ENCODE measurements at regions of chr20 and their contacts with region 1.

Region 1: GRCh38 chr20:49384437-49385088 is 97.9 kb downstream of the KCNB1 start:
- DNase-seq: peak; percentile 83
- H3K4me3 ChIP-seq: no peak overlapping the region
- H3K27ac ChIP-seq: peak overlapping the region; percentile 66 to 91 (median 82)
- H3K4me1 ChIP-seq: peaks cover 0 to 81% (median 63%) of the 10 kb centered on the region in 4 donors
- H3K27me3 ChIP-seq: no peaks in the 10 kb centered on the region
- CTCF ChIP-seq: peak in 3 of 4 experiments; percentile 49 to 68 (median 58)
- EP300 ChIP-seq: no peak
- POLR2A ChIP-seq: no peak

Region 2: DNA sequence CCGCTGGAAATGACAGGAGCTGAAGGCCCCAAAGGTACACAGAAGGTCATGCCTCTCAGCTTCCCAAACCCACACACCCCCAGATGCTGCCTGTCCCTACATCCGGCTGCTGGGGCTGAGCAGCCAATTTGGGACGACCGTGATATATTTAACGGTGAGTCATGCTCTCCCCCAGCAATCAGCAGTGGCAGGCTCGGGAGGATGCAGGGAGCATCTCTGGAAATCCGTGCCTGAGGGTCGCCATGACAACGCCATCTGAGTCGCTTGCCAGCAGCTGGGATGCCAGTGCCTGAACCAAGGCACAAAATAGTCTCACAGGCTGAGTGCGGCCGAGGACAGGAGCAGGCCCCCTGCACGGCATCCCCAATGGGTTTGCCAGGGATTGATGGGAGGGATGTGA is 40.0 kb after region 1 on chr20:
- intact Hi-C with region 1: loop called (anchors 5 kb)
- DNase-seq: peak; percentile 70
- H3K4me3 ChIP-seq: no peak overlapping the region
- H3K27ac ChIP-seq: peak overlapping the region in 2 of 4 donors; percentile 50 to 64
- H3K4me1 ChIP-seq: peaks cover 0 to 68% (median 62%) of the 10 kb centered on the region in 4 donors
- H3K27me3 ChIP-seq: no peaks in the 10 kb centered on the region
- CTCF ChIP-seq: no peak
- EP300 ChIP-seq: no peak
- POLR2A ChIP-seq: no peak